Activated CD8-positive, alpha-beta memory T cell treated with anti-CD3 and anti-CD28 coated beads, Interleukin-2, amount 10 ng/mL, durations not matched to agents 7 days and 5 days (primary cell): ENCODE measurements at regions of chr3 and their contacts with region 1.

Region 1: GRCh38 chr3:52407779-52408178 is 37.1 kb downstream of the SEMA3G start:
- DNase-seq: no peak
- ATAC-seq: no peak
- H3K4me3 Mint-ChIP-seq: peak overlapping the region; percentile 26
- H3K27ac Mint-ChIP-seq: no peak overlapping the region
- H3K4me1 Mint-ChIP-seq: peaks cover 36% of the 10 kb centered on the region
- H3K27me3 Mint-ChIP-seq: no peaks in the 10 kb centered on the region

Region 2: GRCh38 chr3:52428151-52429005 is 20.6 kb after region 1 on chr3:
- CTCF ChIA-PET with region 1: interaction called, 21 read pairs
- DNase-seq: peak; percentile 55
- ATAC-seq: peak; percentile 71
- H3K4me3 Mint-ChIP-seq: no peak overlapping the region
- H3K27ac Mint-ChIP-seq: no peak overlapping the region
- H3K4me1 Mint-ChIP-seq: peaks cover 11% of the 10 kb centered on the region
- H3K27me3 Mint-ChIP-seq: peaks cover 2% of the 10 kb centered on the region

Region 3: GRCh38 chr3:52455283-52456168 is 47.7 kb after region 1 on chr3 and contains the start of gene NISCH:
- CTCF ChIA-PET with region 1: interaction called, 13 read pairs
- DNase-seq: peak; percentile 94
- ATAC-seq: peak; percentile 95
- H3K4me3 Mint-ChIP-seq: peak within 1 kb of the TSS; percentile 95
- H3K27ac Mint-ChIP-seq: peak within 1 kb of the TSS; percentile 94
- H3K4me1 Mint-ChIP-seq: peaks cover 41% of the 10 kb centered on the region
- H3K27me3 Mint-ChIP-seq: no peaks in the 10 kb centered on the region
- total RNA-seq, gene NISCH: 72.9 to 84.1 TPM